Activated CD8-positive, alpha-beta T cell treated with anti-CD3 and anti-CD28 coated beads, Interleukin-2, amount 10 ng/mL, durations not matched to agents 7 days and 5 days (primary cell): ENCODE measurements at regions of chr15 and their contacts with region 1.

Region 1: GRCh38 chr15:35444557-35445204 is 101.3 kb downstream of the DPH6 start:
- DNase-seq: no peak
- ATAC-seq: no peak
- H3K4me3 Mint-ChIP-seq: no peak overlapping the region
- H3K27ac Mint-ChIP-seq: no peak overlapping the region
- H3K4me1 Mint-ChIP-seq: no peaks in the 10 kb centered on the region
- H3K27me3 Mint-ChIP-seq: no peaks in the 10 kb centered on the region

Region 2: DNA sequence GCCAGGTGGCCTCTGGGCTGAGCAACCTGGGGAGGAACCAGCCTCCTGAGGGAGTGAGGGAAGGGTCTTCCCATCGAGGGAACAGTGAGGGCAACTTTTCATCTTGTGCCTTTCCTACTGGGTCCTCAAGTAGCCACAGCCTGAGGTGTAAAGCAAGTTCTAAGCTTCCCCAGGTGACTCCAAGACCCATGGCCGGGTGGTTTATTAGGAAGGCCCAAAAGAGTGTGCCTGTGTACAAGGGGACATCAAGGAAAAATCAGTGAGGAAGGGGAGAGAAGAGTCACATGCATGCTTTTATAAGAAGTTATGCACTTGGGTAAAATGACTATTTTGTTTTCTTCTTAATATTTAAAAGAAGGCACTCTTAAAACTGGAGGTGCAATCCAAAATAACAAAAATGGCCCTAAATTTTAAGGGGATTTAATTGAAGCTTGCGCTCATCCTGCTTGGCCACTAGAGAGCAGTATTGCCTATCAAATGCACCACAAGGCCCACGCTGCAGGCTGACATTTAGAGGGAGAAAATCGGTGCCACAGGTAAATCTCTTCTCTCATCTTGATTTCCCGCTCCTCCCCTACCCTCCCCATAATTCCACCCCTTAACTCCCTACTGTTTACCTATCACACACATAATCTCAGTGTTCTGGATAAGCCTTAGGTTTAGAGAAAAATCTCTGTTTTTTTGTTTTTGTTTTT is 366.3 kb before region 1 on chr15:
- CTCF ChIA-PET with region 1: interaction called, 56 read pairs
- POLR2A ChIA-PET with region 1: no interaction called
- DNase-seq: peak; percentile 52
- ATAC-seq: no peak
- H3K4me3 Mint-ChIP-seq: no peak overlapping the region
- H3K27ac Mint-ChIP-seq: no peak overlapping the region
- H3K4me1 Mint-ChIP-seq: no peaks in the 10 kb centered on the region
- H3K27me3 Mint-ChIP-seq: peaks cover 3% of the 10 kb centered on the region

Region 3: GRCh38 chr15:35289024-35289617 is 155.6 kb before region 1 on chr15:
- CTCF ChIA-PET with region 1: interaction called, 62 read pairs
- POLR2A ChIA-PET with region 1: no interaction called
- DNase-seq: no peak
- ATAC-seq: no peak
- H3K4me3 Mint-ChIP-seq: no peak overlapping the region
- H3K27ac Mint-ChIP-seq: no peak overlapping the region
- H3K4me1 Mint-ChIP-seq: no peaks in the 10 kb centered on the region
- H3K27me3 Mint-ChIP-seq: no peaks in the 10 kb centered on the region

Region 4: DNA sequence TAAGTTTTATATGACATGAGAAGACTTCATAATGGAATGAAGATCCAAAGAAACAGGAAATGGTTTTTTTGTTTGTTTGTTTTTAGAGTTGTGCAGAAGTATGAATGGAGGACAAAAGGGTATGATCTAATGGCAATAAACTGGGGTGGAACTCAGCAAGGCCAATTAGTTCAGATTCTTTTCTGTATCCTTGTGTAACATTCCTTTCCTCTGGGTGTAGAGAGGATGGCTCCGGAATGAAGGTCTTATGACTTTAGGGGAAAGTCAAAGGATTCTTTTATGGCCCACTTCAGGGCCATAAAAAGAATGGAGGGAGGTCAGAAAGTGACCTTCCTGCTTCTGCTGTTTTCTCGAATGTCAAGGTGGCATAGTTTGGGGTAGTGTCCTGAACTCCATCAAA is 51.3 kb before region 1 on chr15:
- CTCF ChIA-PET with region 1: no interaction called
- POLR2A ChIA-PET with region 1: no interaction called
- DNase-seq: no peak
- ATAC-seq: no peak
- H3K4me3 Mint-ChIP-seq: no peak overlapping the region
- H3K27ac Mint-ChIP-seq: no peak overlapping the region
- H3K4me1 Mint-ChIP-seq: no peaks in the 10 kb centered on the region
- H3K27me3 Mint-ChIP-seq: no peaks in the 10 kb centered on the region

Region 5: GRCh38 chr15:35427091-35427490 is 17.6 kb before region 1 on chr15:
- CTCF ChIA-PET with region 1: interaction called, 47 read pairs
- POLR2A ChIA-PET with region 1: no interaction called
- DNase-seq: no peak
- ATAC-seq: no peak
- H3K4me3 Mint-ChIP-seq: no peak overlapping the region
- H3K27ac Mint-ChIP-seq: no peak overlapping the region
- H3K4me1 Mint-ChIP-seq: no peaks in the 10 kb centered on the region
- H3K27me3 Mint-ChIP-seq: no peaks in the 10 kb centered on the region

Region 6: GRCh38 chr15:35460616-35461015 is 15.9 kb after region 1 on chr15:
- CTCF ChIA-PET with region 1: interaction called, 14 read pairs
- POLR2A ChIA-PET with region 1: no interaction called
- DNase-seq: no peak
- ATAC-seq: no peak
- H3K4me3 Mint-ChIP-seq: no peak overlapping the region
- H3K27ac Mint-ChIP-seq: no peak overlapping the region
- H3K4me1 Mint-ChIP-seq: no peaks in the 10 kb centered on the region
- H3K27me3 Mint-ChIP-seq: no peaks in the 10 kb centered on the region

Region 7: DNA sequence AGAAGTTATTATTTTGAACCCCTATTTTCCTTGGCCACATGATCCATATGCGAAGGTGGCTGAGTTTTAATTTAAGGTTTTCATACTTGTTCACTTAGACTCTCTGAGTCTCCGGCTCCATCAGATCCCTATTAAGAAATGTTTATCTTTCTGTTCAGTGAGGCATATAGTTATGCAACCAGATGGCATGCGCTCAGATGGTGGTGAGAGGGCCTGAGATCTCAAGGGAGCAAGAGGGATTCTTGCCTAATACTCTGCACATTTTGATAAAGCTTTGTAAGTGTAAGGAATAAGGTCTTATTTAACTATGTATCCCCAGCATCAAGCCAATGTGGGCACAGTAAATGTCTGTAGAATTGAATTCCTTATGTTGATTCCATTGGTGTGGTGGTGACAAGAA is 180.2 kb after region 1 on chr15:
- CTCF ChIA-PET with region 1: no interaction called
- POLR2A ChIA-PET with region 1: no interaction called
- DNase-seq: no peak
- ATAC-seq: no peak
- H3K4me3 Mint-ChIP-seq: no peak overlapping the region
- H3K27ac Mint-ChIP-seq: no peak overlapping the region
- H3K4me1 Mint-ChIP-seq: no peaks in the 10 kb centered on the region
- H3K27me3 Mint-ChIP-seq: no peaks in the 10 kb centered on the region

Region 8: GRCh38 chr15:35757765-35758164 is 313.1 kb after region 1 on chr15:
- CTCF ChIA-PET with region 1: no interaction called
- POLR2A ChIA-PET with region 1: no interaction called
- DNase-seq: no peak
- ATAC-seq: no peak
- H3K4me3 Mint-ChIP-seq: no peak overlapping the region
- H3K27ac Mint-ChIP-seq: no peak overlapping the region
- H3K4me1 Mint-ChIP-seq: no peaks in the 10 kb centered on the region
- H3K27me3 Mint-ChIP-seq: peaks cover 2% of the 10 kb centered on the region